Activated B cell treated with CpG ODN at 0.5 μM for 24 hours (primary cell): ENCODE measurements at regions of chr1 and their contacts with region 1.

Region 1: GRCh38 chr1:66331657-66332547 is 202.1 kb upstream of the SGIP1 start:
- DNase-seq: no peak
- ATAC-seq: peak; percentile 9
- H3K4me3 Mint-ChIP-seq: peak overlapping the region; percentile 98
- H3K27ac Mint-ChIP-seq: peak overlapping the region; percentile 98
- H3K4me1 Mint-ChIP-seq: peaks cover 70% of the 10 kb centered on the region
- H3K27me3 Mint-ChIP-seq: no peaks in the 10 kb centered on the region
- CTCF ChIP-seq: no peak

Region 2: DNA sequence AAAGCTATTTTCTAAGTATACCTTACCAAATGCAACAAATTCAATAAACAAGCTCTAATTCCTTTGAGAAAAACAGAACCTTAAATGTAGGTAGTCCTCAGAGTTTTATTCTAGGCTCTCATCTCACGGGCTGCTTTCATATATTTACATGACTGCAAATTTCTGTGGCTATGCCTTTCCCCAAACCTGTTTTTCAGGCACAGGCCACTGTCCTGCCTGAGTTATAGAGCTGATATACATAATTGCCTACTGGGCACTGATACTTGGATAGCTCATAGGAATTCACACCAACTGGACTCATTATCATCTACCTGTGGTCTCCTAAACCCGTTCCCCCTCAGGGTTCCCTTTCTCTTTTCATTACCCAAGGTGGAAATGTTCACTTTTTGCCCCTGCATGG is 1608.1 kb before region 1 on chr1:
- CTCF ChIA-PET with region 1: no interaction called
- POLR2A ChIA-PET with region 1: no interaction called
- intact Hi-C with region 1: no loop called
- DNase-seq: no peak
- ATAC-seq: no peak
- H3K4me3 Mint-ChIP-seq: no peak overlapping the region
- H3K27ac Mint-ChIP-seq: no peak overlapping the region
- H3K4me1 Mint-ChIP-seq: no peaks in the 10 kb centered on the region
- H3K27me3 Mint-ChIP-seq: peaks cover 32% of the 10 kb centered on the region
- CTCF ChIP-seq: no peak

Region 3: DNA sequence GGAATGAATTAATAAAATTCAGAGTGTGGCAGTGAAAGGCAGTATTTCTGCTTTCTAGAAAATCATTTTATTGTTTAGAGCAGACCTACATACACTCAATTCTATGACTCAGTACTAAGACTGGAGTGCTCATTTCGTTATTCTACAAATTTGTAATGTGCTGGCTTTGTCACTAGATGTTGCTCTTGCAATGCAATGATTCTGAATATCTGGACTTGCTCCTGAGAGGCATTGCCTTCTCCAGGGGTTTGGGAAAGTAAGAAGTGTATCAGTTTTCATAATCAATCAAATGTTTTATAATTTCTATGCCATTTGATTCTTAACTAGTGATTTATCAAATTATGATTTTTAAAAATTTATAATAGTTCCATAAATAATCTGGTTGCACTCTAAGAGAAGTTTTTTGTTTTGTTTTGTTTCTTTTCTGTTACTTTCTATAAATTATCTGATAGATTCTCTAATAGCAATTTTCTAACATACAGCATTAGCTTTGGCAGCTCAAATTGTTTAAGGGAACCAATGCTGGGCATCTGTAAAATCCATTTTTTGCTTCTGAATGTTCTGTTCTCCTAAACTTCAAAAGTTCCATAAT is 78.5 kb before region 1 on chr1:
- CTCF ChIA-PET with region 1: interaction called, 11 read pairs
- POLR2A ChIA-PET with region 1: interaction called, 18 read pairs
- intact Hi-C with region 1: loop called (anchors 1 kb)
- DNase-seq: no peak
- ATAC-seq: peak; percentile 95
- H3K4me3 Mint-ChIP-seq: no peak overlapping the region
- H3K27ac Mint-ChIP-seq: peak overlapping the region; percentile 82
- H3K4me1 Mint-ChIP-seq: peaks cover 28% of the 10 kb centered on the region
- H3K27me3 Mint-ChIP-seq: no peaks in the 10 kb centered on the region
- CTCF ChIP-seq: peak; percentile 34

Region 4: GRCh38 chr1:66294692-66295384 is 37.1 kb before region 1 on chr1:
- CTCF ChIA-PET with region 1: interaction called, 4 read pairs
- POLR2A ChIA-PET with region 1: interaction called, 14 read pairs
- intact Hi-C with region 1: loop called (anchors 2 kb)
- DNase-seq: no peak
- ATAC-seq: no peak
- H3K4me3 Mint-ChIP-seq: no peak overlapping the region
- H3K27ac Mint-ChIP-seq: no peak overlapping the region
- H3K4me1 Mint-ChIP-seq: peaks cover 51% of the 10 kb centered on the region
- H3K27me3 Mint-ChIP-seq: no peaks in the 10 kb centered on the region
- CTCF ChIP-seq: no peak

Region 5: DNA sequence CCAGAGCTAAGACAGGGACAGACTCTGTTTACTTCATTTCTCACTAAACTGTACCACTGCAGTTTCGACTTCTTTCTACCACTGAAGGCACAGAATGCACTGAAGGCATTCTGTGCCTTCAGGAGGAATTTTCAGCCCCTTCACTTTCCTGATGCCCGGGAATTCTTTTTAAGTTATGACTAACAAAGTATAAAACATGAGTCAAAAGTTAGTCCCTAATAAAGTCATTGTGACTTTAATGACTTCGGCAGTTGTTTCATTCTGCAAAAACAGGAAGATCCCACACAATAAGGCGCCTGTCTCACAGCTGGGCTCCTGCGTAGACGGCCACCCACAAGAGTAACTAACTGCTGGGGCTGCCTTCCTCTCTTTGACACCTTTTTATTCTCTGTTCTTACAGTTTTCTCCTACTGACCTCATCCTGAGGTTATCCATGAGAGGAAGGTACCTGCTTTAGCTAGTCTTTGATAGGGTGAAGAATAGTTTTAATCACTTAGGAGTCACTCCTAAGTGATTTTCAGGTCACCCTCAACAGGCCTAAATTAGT is 18.2 kb after region 1 on chr1:
- CTCF ChIA-PET with region 1: interaction called, 8 read pairs
- POLR2A ChIA-PET with region 1: interaction called, 72 read pairs
- intact Hi-C with region 1: loop called (anchors 1 kb)
- DNase-seq: no peak
- ATAC-seq: peak; percentile 80
- H3K4me3 Mint-ChIP-seq: peak overlapping the region; percentile 72
- H3K27ac Mint-ChIP-seq: peak overlapping the region; percentile 89
- H3K4me1 Mint-ChIP-seq: peaks cover 97% of the 10 kb centered on the region
- H3K27me3 Mint-ChIP-seq: no peaks in the 10 kb centered on the region
- CTCF ChIP-seq: no peak

Region 6: DNA sequence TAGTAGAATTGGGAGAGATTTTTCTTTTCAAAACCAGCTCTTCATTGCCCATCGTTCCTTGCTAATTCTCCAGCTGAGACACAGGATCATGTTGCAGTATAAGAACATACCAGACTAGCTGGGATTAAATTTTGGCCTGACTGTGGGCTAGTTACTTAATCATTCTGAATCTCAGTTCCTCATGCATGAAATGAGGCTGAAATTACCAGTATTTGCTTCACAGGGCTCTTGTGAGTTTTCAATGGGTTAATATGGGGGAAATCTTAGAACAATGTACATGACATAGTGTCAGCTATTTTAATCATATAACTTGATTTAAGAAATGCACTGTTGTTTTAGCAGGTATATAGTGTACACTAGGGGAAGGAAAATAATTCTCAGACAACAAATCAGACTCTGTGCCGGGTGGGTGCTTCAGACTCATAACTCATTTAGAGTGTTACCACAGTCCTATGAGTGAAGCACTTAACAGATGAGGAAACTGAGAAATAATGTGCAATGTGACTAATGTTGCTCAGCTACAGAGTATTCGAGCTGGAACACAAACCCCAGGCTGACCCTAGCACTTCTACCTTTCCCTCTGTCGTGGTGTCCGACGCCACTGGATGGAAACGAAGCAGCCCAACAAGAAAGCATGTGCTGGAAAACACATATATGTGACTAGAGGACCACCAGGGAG is 64.4 kb after region 1 on chr1:
- CTCF ChIA-PET with region 1: interaction called, 3 read pairs
- POLR2A ChIA-PET with region 1: interaction called, 74 read pairs
- intact Hi-C with region 1: loop called (anchors 2 kb)
- DNase-seq: no peak
- ATAC-seq: peak; percentile 71
- H3K4me3 Mint-ChIP-seq: peak overlapping the region; percentile 48
- H3K27ac Mint-ChIP-seq: peak overlapping the region; percentile 74
- H3K4me1 Mint-ChIP-seq: peaks cover 81% of the 10 kb centered on the region
- H3K27me3 Mint-ChIP-seq: no peaks in the 10 kb centered on the region
- CTCF ChIP-seq: no peak

Region 7: DNA sequence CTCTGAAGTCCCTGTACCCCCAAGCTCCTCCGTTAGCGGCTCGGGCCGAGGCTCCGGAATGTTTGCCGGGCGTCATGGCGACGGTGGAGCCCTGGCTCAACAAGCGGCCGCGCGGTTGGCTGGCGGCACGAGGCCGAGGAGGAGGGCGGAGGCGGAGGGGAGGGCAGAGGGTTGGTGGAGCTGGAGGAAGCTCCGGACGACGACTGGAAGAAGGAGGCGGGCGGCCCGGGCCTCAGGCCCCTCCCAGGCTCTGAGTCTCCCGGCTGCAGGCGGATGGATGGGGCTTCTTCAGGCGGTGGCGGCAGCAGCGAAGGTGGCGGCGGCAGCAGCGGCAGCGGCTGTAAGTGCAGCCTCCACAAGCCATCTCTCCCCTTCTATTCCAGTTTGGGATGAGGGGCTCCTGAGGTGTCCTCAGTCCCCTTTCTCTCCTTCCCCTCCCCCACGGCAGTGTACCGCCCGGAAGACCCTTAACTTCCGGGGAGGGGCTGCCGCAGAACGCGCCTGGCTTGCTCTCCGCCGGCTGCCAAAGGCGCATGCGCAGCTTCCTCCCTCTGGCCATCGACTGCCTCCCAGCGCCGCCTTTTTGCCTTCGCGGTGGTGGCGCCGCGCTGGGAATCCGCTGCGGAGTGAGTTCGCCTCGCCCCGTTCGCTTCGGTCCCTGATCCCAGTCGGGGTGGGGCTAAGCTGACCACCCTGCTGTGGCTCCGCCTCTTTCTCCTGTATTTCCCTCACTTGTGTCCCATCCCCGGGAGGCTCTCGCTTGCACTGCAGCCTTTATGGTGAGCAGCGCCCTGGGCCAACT is 593.1 kb after region 1 on chr1 and contains the starts of genes DNAI4 and MIER1:
- CTCF ChIA-PET with region 1: no interaction called
- POLR2A ChIA-PET with region 1: no interaction called
- intact Hi-C with region 1: loop called (anchors 5 kb)
- DNase-seq: peak; percentile 95
- ATAC-seq: peak; percentile 94
- H3K4me3 Mint-ChIP-seq: peak within 1 kb of the TSS; percentile 93
- H3K27ac Mint-ChIP-seq: peak within 1 kb of the TSS; percentile 95
- H3K4me1 Mint-ChIP-seq: peaks cover 30% of the 10 kb centered on the region
- H3K27me3 Mint-ChIP-seq: no peaks in the 10 kb centered on the region
- CTCF ChIP-seq: no peak
- total RNA-seq, gene DNAI4: 0.75 and 3.4 TPM in 2 replicates
- total RNA-seq, gene MIER1: 39.1 and 39.2 TPM in 2 replicates